Activated CD4-positive, alpha-beta T cell treated with anti-CD3 and anti-CD28 coated beads for 36 hours (primary cell): ENCODE measurements at regions of chr5 and their contacts with region 1.

Region 1: DNA sequence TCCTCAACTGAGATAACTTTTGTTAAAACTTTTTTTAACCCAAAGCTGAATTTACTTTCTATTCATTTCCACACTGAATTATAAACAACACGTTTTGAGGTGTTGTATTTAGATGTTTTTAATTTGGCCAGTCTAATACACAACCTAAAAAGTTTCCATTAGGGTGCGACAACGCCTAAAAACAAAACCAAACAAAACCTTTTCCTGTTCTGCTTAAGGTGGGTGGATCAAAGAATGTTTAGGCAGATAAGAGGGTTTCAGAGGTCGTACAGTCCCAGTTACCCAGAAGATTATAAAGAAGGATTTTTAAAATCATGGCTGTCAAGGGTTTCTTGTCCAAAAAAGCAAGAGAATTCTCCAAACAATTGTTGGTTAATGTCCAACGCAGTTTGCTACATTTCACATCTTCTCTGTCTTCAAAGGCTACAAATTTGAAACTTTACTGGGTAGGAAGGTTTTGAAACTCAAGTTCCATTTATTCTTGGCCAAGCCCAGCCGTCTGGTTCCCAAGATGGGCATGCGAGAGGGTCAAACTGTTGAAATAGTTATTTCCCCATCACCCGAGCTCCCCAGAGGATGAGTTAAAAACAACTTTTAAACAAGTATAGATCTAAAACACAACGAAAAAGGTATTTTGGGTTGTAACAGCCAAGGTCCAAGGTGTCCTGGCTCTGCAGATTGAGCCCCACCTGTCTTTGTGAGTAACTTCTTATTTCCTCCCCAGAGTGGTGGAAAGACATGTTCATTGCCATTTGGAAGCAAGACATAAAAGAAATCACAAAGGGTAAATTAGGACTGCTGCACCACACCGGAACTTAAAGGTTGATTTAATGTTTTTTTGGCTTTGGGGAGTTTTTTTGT is 122.8 kb upstream of the MAP3K1 start:
- DNase-seq: no peak
- ATAC-seq: peak; percentile 30
- H3K4me3 Mint-ChIP-seq: peak overlapping the region; percentile 20
- H3K27ac Mint-ChIP-seq: peak overlapping the region; percentile 80
- H3K4me1 Mint-ChIP-seq: peaks cover 82% of the 10 kb centered on the region
- H3K27me3 Mint-ChIP-seq: no peaks in the 10 kb centered on the region

Region 2: GRCh38 chr5:56670118-56670483 is 22.5 kb before region 1 on chr5:
- CTCF ChIA-PET with region 1: interaction called, 4 read pairs
- POLR2A ChIA-PET with region 1: no interaction called
- intact Hi-C with region 1: loop called in 1 of 2 experiments (anchors 2 kb)
- DNase-seq: peak; percentile 69
- ATAC-seq: peak; percentile 96
- H3K4me3 Mint-ChIP-seq: no peak overlapping the region
- H3K27ac Mint-ChIP-seq: no peak overlapping the region
- H3K4me1 Mint-ChIP-seq: peaks cover 39% of the 10 kb centered on the region
- H3K27me3 Mint-ChIP-seq: no peaks in the 10 kb centered on the region